ENCODE measurements at regions of chr15 and their contacts with region 1.

Region 1: DNA sequence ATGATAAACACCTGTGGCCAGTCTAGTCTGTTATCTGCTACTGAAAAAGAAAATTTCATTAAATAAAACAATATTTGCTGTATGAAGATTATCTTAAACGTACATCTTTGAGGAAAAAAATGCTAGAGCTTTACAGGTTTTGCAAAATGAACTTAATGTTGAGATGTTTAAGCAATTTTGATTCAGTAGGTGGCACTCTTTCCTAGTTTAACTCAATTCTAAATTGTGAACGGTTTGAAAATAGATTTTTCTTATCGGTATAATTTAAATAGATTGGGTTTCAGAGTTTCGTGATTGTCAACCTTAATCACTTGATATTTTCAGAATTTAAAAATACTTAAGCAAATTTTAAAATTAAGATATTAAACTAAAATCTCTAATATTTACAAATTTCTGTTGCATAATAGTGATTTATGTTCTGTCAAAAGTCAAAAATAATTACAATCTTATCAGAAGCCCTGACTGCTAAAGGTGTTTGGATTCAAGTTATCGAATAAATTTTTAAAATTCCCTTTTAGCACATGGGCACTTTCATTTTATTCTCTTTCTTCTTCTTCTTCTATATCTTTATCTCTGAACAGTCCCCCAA is 7.0 kb upstream of the RNF111 start:
- DNase-seq: no peak
- H3K4me3 Mint-ChIP-seq: no peak overlapping the region
- H3K27ac Mint-ChIP-seq: peak overlapping the region; percentile 18
- H3K4me1 Mint-ChIP-seq: peaks cover 36% of the 10 kb centered on the region
- H3K27me3 Mint-ChIP-seq: no peaks in the 10 kb centered on the region

Region 2: DNA sequence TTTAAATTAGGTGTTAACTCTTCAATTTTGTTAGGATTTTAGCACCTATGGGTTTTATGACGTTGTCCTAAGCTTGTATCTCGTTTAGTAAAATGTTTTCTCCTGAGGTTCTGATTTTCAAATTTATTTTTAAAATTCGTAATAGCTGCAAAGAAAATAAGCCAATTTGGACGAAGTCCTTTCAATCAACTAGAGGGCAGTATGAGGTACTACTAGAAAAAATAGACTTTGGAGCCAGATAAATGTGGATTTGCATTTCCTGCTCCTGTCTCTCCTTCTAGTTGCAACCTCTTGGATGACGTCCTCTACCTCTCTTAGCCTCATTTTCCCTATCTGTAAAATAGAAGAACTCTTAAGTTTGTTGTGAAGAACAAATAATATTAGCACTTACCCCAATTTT is 128.1 kb before region 1 on chr15:
- CTCF ChIA-PET with region 1: no interaction called
- POLR2A ChIA-PET with region 1: no interaction called
- intact Hi-C with region 1: no loop called
- DNase-seq: no peak
- H3K4me3 Mint-ChIP-seq: no peak overlapping the region
- H3K27ac Mint-ChIP-seq: no peak overlapping the region
- H3K4me1 Mint-ChIP-seq: no peaks in the 10 kb centered on the region
- H3K27me3 Mint-ChIP-seq: no peaks in the 10 kb centered on the region

Region 3: DNA sequence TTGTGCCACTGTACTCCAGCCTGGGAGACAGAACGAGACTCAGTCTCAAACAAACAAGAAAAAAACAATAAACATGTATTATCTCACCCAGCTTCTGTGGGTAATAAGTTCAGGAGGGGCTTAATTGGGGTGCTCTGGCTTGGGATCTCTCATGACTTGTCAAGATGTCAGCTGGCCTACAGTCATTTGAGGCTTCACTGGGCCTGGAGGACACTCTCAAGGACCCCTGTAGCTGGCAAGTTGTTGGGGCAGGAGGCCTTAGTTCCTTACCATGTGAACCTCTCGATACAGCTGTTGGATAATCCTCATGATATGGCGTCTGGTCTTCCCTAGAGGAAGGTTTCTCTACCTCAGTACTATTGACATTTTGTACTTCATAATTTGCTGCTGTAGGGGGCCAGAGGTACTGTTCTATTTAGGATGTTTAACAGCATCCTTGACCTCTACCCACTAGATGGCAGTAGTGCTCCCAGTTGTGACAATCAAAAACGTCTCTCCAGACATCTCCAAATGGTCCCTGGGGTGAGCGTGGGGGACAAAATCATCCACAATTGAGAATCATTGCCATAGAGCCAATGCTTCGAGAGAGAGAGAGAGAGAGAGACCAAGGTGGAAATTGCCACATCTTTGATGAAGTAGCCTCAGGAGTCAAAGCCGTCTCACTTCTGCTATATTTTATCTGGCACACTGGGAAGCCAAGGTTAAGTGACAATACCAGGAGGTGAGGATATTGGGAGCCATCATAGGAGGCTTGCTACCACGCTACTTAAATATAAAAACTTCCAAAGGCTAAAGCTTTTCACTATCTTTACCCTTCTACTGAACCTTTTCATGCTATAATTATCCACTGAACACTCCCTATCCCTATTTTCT is 23.1 kb before region 1 on chr15:
- CTCF ChIA-PET with region 1: interaction called, 14 read pairs
- POLR2A ChIA-PET with region 1: no interaction called
- intact Hi-C with region 1: no loop called
- DNase-seq: peak; percentile 58
- H3K4me3 Mint-ChIP-seq: no peak overlapping the region
- H3K27ac Mint-ChIP-seq: peak overlapping the region; percentile 29
- H3K4me1 Mint-ChIP-seq: peaks cover 12% of the 10 kb centered on the region
- H3K27me3 Mint-ChIP-seq: no peaks in the 10 kb centered on the region

Region 4: GRCh38 chr15:59039225-59039624 is 58.8 kb after region 1 on chr15:
- CTCF ChIA-PET with region 1: no interaction called
- POLR2A ChIA-PET with region 1: no interaction called
- intact Hi-C with region 1: loop called (anchors 2 kb)
- DNase-seq: no peak
- H3K4me3 Mint-ChIP-seq: no peak overlapping the region
- H3K27ac Mint-ChIP-seq: peak overlapping the region; percentile 40
- H3K4me1 Mint-ChIP-seq: peaks cover 47% of the 10 kb centered on the region
- H3K27me3 Mint-ChIP-seq: no peaks in the 10 kb centered on the region

Region 5: DNA sequence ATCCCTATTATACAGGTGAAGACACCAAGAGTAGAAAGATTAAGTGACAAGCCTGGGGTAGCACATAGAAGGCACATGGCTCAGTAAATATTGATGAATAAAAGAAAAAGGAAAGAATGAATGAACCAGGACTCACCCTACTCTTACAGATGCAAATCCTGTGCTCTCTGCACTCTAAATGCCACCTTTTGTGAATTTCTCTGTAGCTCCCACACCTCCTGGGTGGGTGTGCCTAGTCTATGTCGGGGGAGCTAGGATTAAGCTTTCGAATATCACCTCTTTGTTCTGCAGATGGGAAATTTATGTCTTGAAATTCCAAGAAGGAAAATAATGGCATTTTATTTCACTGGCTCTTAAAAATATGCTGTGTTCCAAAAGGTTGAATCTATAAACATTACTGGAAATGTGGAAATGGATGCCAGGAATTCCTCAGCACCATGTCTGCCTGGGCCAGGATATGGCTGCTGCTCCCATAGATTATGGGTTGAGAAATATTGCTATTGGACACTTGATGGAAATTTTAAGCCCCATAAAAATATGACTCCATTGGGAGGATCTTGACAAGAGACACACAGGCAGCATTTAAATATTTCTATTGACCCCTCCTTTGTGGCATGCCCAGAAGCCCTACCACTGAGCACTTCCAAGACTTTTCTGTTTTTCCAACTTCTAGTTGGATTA is 167.8 kb after region 1 on chr15:
- CTCF ChIA-PET with region 1: no interaction called
- POLR2A ChIA-PET with region 1: no interaction called
- intact Hi-C with region 1: no loop called
- DNase-seq: no peak
- H3K4me3 Mint-ChIP-seq: no peak overlapping the region
- H3K27ac Mint-ChIP-seq: no peak overlapping the region
- H3K4me1 Mint-ChIP-seq: no peaks in the 10 kb centered on the region
- H3K27me3 Mint-ChIP-seq: no peaks in the 10 kb centered on the region

Region 6: GRCh38 chr15:59247364-59247763 is 266.9 kb after region 1 on chr15:
- CTCF ChIA-PET with region 1: interaction called, 5 read pairs
- POLR2A ChIA-PET with region 1: no interaction called
- intact Hi-C with region 1: loop called (anchors 5 kb)
- DNase-seq: peak; percentile 60
- H3K4me3 Mint-ChIP-seq: no peak overlapping the region
- H3K27ac Mint-ChIP-seq: no peak overlapping the region
- H3K4me1 Mint-ChIP-seq: peaks cover 8% of the 10 kb centered on the region
- H3K27me3 Mint-ChIP-seq: no peaks in the 10 kb centered on the region

Region 7: DNA sequence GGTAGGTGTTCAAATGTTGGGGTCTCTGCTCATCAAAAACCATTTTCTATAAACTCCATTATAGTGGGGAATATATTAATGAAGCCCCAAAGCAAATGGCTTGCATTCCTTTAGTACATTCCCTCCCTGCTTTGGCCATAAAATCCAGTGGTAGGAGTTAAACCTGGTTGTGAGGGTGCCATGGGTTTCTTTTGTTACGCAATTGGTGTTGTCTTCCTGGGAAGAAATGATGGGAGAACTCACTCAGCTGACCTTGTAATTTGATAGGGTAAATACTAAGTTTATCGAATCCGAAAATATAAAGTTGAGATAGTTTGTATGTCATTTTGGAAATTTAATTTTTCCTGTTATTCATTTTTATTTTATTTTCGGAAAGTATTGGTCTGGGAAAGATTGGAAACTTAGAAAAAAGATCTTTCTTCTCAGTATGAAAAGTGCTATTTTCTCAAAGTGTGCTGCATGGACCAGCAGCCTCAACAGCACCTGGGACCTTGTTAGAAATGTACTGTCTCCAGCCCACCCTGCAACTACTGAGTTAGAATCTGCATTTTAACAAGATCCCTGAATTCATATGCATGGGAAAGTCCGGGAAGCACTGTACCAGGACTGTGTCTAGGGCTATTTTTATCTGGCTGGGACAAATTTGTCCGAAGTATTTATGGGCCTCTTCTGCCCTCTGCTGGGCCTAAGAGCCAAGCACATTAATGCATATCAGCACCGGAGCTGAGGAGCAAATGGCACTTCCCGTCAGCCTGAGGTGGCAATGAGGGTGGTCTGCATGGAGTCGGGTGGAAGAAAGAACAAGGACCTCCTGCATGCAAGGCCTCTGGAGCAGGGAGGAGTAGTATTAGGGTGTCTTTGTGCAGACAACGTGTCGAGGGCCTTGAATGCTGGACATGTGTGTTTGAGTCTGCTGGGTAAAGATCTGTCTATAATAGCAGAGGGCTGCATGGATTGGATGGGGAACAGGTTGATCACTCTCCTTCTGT is 512.2 kb after region 1 on chr15:
- CTCF ChIA-PET with region 1: interaction called, 19 read pairs
- POLR2A ChIA-PET with region 1: no interaction called
- intact Hi-C with region 1: loop called (anchors 1 kb)
- DNase-seq: peak; percentile 56
- H3K4me3 Mint-ChIP-seq: no peak overlapping the region
- H3K27ac Mint-ChIP-seq: no peak overlapping the region
- H3K4me1 Mint-ChIP-seq: peaks cover 2% of the 10 kb centered on the region
- H3K27me3 Mint-ChIP-seq: no peaks in the 10 kb centered on the region

Region 8: GRCh38 chr15:59797756-59798604 is 817.5 kb after region 1 on chr15:
- CTCF ChIA-PET with region 1: no interaction called
- POLR2A ChIA-PET with region 1: no interaction called
- intact Hi-C with region 1: loop called (anchors 5 kb)
- DNase-seq: no peak
- H3K4me3 Mint-ChIP-seq: peak overlapping the region; percentile 9
- H3K27ac Mint-ChIP-seq: peak overlapping the region; percentile 19
- H3K4me1 Mint-ChIP-seq: peaks cover 66% of the 10 kb centered on the region
- H3K27me3 Mint-ChIP-seq: no peaks in the 10 kb centered on the region